Ovary (tissue), 10 donors: ENCODE measurements at regions of chr6 and their contacts with region 1.

Region 1: DNA sequence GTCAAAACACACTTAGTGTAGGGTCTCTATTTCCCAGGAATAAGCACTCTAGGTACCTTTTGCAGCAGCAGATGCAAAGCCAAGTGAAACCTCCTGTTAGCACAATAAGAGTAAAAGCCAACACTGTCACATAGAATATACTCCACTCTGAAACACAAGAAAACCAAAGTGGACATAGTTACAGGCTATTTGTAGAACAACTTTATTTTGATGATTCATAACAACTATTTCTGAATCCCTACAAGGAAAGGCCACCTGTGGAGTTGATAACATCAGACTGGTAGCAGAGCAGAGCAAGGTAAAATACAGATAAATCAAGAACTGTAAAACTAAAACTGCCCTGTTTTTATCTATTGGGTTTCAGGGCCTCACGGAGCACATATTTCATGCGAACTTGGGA is 59.7 kb downstream of the ALDH5A1 start:
- DNase-seq: no peak
- H3K4me3 ChIP-seq: no peak overlapping the region
- H3K27ac ChIP-seq: no peak overlapping the region
- H3K4me1 ChIP-seq: no peaks in the 10 kb centered on the region
- H3K27me3 ChIP-seq: no peaks in the 10 kb centered on the region
- CTCF ChIP-seq: no peak
- EP300 ChIP-seq: no peak
- POLR2A ChIP-seq: no peak

Region 2: DNA sequence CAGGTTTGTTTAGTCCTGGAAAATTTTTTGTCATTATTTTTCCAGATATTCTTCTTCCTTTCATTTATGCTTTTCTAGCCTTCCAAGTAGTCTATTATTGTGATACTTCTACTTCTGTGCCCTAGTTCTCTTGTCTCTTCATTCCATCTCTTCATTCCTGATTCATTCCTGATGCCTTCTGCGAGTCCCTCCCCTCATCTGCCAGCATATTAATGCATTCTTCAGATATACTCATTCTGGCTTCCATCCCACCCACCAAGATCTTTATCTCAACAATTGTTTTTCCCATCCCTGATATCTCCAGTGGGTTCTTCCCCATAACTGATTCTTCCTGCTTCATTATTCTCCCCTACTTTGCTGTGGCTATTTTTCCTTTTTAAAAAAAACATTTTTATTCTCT is 24.5 kb before region 1 on chr6:
- intact Hi-C with region 1: loop called in 1 of 4 experiments (anchors 1 kb)
- DNase-seq: no peak
- H3K4me3 ChIP-seq: no peak overlapping the region
- H3K27ac ChIP-seq: no peak overlapping the region
- H3K4me1 ChIP-seq: no peaks in the 10 kb centered on the region
- H3K27me3 ChIP-seq: no peaks in the 10 kb centered on the region
- CTCF ChIP-seq: no peak
- EP300 ChIP-seq: no peak
- POLR2A ChIP-seq: no peak

Region 3: DNA sequence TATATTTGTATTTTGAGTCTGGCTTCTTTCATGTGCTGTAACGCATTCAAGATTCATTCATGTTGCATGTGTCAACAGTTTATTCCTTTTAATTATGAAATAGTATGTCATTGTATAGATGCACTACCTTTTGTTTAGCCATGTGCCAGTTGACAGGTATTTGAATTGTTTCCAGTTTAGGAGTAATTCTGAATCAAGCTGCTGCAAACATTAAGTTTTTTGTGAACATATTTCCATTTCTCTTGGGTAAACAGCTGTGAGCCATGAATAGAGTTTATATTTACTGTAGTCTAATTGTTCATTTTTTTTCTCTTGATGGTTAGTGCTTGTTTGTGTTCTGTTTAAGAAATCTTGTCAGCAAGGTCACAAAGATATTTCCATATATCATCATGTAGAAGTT is 523.7 kb after region 1 on chr6:
- intact Hi-C with region 1: no loop called
- DNase-seq: no peak
- H3K4me3 ChIP-seq: no peak overlapping the region
- H3K27ac ChIP-seq: no peak overlapping the region
- H3K4me1 ChIP-seq: no peaks in the 10 kb centered on the region
- H3K27me3 ChIP-seq: no peaks in the 10 kb centered on the region
- CTCF ChIP-seq: no peak
- EP300 ChIP-seq: no peak
- POLR2A ChIP-seq: no peak